Activated CD4-positive, alpha-beta T cell treated with anti-CD3 and anti-CD28 coated beads, Interleukin-2, amount 10 ng/mL, durations not matched to agents 7 days and 5 days (primary cell): ENCODE measurements at regions of chr21 and their contacts with region 1.

Region 1: GRCh38 chr21:44892536-44893277 is 19.2 kb upstream of the PTTG1IP start:
- DNase-seq: peak; percentile 80
- H3K4me3 Mint-ChIP-seq: no peak overlapping the region
- H3K27ac Mint-ChIP-seq: peak overlapping the region; percentile 46
- H3K4me1 Mint-ChIP-seq: peaks cover 14% of the 10 kb centered on the region
- H3K27me3 Mint-ChIP-seq: no peaks in the 10 kb centered on the region

Region 2: DNA sequence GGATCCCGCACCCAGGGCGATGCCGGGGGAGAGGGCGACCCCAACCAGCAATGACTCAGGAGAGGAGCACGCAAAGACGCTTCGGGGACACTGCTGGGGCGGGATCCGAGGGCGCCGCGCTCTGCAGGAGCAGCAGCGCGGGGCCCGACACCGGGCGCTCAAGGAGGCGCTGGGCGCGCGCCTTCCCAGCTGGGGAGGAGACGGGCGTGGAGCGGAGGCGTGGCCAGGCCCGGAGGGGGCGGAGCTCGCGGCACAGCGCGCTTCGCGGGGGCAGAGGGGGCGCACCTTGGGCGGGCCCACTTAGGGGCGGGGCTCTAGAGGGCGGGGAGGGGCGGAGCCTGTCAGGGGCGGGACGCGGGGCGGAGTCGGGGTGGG is 75.2 kb before region 1 on chr21:
- CTCF ChIA-PET with region 1: no interaction called
- POLR2A ChIA-PET with region 1: no interaction called
- DNase-seq: peak; percentile 93
- H3K4me3 Mint-ChIP-seq: peak overlapping the region; percentile 70
- H3K27ac Mint-ChIP-seq: peak overlapping the region; percentile 64
- H3K4me1 Mint-ChIP-seq: peaks cover 22% of the 10 kb centered on the region
- H3K27me3 Mint-ChIP-seq: peaks cover 2% of the 10 kb centered on the region

Region 3: GRCh38 chr21:44911389-44912157 is 18.9 kb after region 1 on chr21:
- CTCF ChIA-PET with region 1: interaction called, 39 read pairs
- POLR2A ChIA-PET with region 1: no interaction called
- DNase-seq: peak; percentile 80
- H3K4me3 Mint-ChIP-seq: peak overlapping the region; percentile 71
- H3K27ac Mint-ChIP-seq: peak overlapping the region; percentile 90
- H3K4me1 Mint-ChIP-seq: peaks cover 73% of the 10 kb centered on the region
- H3K27me3 Mint-ChIP-seq: no peaks in the 10 kb centered on the region

Region 4: DNA sequence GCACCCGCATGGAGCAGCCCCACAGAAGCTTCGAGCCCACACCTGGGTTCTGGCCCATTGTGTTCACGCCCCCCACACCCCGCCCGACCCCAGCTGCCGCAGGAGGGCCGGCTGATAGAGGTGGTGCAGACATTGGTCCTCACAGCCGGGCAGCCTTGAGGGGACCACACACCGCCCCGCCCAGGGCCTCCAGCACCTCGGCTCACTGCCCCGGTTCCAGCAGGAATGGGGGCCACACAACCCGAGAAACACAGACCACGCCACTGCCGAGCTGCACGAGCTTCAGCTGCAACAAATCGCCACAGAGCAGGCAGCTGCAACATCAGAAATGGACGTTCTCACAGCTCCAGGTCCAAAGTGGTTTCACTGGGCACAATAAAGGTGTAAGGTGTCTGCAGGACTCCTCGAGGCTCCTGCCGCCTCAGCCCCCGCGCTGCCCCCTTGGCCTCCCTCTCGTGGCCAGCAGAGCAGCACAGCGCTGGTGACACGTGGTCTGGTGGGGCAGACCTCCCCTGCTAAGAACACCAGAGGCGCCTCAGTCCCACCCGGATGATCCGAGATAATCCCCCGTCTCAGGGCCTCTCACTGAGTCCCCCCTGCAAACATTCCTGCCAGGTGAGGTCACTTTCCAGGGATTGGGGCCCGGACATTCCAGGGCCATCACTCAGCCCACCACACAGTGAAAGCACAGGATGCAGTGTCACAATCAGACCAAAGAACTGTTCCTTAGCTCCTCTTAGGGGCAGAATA is 119.4 kb after region 1 on chr21:
- CTCF ChIA-PET with region 1: no interaction called
- POLR2A ChIA-PET with region 1: no interaction called
- DNase-seq: no peak
- H3K4me3 Mint-ChIP-seq: no peak overlapping the region
- H3K27ac Mint-ChIP-seq: no peak overlapping the region
- H3K4me1 Mint-ChIP-seq: no peaks in the 10 kb centered on the region
- H3K27me3 Mint-ChIP-seq: peaks cover 42% of the 10 kb centered on the region